ENCODE measurements at regions of chr1 and their contacts with region 1.

Region 1: DNA sequence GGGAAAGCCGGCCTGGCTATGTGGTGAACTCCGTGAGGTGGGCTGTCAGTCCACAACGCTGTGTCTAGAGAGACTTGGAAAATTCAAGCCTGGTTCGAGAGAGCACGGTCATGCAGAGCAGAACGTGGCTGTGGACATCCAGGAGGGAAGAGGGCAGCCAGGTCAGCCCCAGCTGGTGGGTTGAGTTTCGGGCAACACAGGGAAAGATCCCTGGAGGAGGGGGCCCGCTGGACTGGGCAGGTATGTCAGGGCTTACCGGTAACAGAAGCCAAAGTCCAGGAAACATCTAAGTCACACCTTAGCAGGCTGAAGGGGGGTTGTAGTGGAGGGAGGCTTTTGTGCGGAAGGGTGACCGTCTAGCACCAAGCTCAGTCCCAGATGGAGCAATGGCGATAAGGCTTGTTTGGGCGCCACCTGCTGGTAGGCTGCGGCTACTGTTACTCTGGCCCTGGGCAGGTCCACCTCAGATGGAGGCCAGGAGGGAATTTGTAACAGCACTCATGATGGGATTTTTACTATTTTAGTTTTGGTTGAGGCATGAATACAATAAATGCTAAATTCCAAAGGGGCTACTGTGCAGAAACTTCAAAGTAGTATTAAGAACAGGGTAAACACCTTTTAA is 143.3 kb upstream of the ZNF644 start:
- DNase-seq: peak; percentile 44
- ATAC-seq: peak; percentile 97
- H3K4me3 ChIP-seq: no peak overlapping the region
- H3K27ac ChIP-seq: no peak overlapping the region
- H3K4me1 ChIP-seq: no peaks in the 10 kb centered on the region
- H3K27me3 ChIP-seq: no peaks in the 10 kb centered on the region
- CTCF ChIP-seq: peak; percentile 80 to 98 (median 96)
- POLR2A ChIP-seq: no peak
- RAD21 ChIP-seq: peak; percentile 85

Region 2: GRCh38 chr1:90114521-90115141 is 1050.5 kb before region 1 on chr1:
- CTCF ChIA-PET with region 1: interaction called, 16 read pairs
- POLR2A ChIA-PET with region 1: no interaction called
- RAD21 ChIA-PET with region 1: no interaction called
- intact Hi-C with region 1: loop called (anchors 1 kb)
- DNase-seq: peak; percentile 56
- ATAC-seq: peak; percentile 74; the same call in 1 of the 2 replicates
- H3K4me3 ChIP-seq: no peak overlapping the region
- H3K27ac ChIP-seq: no peak overlapping the region
- H3K4me1 ChIP-seq: no peaks in the 10 kb centered on the region
- H3K27me3 ChIP-seq: peaks cover 44% of the 10 kb centered on the region
- CTCF ChIP-seq: peak; percentile 53 to 81 (median 69); a peak in 5 of 6 replicates
- POLR2A ChIP-seq: no peak
- RAD21 ChIP-seq: peak; percentile 75

Region 3: DNA sequence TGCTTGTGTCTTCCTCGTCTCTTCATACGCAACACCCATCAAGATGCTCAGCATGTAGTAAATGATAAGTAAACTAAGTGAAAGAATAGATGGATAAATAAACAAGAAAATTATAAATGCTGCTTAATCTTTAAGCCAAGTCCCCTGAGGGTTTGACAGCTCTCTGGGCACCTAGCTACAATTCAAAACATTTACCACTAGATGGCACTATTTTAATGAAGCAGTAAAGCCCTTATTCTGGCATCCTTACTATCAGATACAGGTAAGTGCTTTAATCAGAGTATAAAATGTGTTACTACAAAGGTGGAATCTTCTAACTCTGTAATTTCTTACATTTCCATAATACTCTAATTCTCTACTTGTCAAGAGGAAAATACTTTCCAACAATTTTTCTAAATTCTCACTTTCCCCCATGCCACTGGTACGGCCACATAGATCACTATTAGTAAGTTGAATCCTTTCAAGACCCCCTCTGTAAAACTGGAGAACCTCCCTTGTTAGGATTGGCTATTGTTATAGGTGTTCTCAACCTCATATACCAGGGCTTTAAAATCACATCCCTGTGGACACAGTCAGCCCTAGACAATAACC is 585.8 kb before region 1 on chr1:
- CTCF ChIA-PET with region 1: interaction called, 18 read pairs
- POLR2A ChIA-PET with region 1: no interaction called
- RAD21 ChIA-PET with region 1: no interaction called
- intact Hi-C with region 1: no loop called
- DNase-seq: peak; percentile 43
- ATAC-seq: peak; percentile 86
- H3K4me3 ChIP-seq: no peak overlapping the region
- H3K27ac ChIP-seq: no peak overlapping the region
- H3K4me1 ChIP-seq: no peaks in the 10 kb centered on the region
- H3K27me3 ChIP-seq: peaks cover 26% of the 10 kb centered on the region
- CTCF ChIP-seq: peak; percentile 42 to 71 (median 46); a peak in 5 of 6 replicates
- POLR2A ChIP-seq: no peak
- RAD21 ChIP-seq: peak; percentile 58

Region 4: DNA sequence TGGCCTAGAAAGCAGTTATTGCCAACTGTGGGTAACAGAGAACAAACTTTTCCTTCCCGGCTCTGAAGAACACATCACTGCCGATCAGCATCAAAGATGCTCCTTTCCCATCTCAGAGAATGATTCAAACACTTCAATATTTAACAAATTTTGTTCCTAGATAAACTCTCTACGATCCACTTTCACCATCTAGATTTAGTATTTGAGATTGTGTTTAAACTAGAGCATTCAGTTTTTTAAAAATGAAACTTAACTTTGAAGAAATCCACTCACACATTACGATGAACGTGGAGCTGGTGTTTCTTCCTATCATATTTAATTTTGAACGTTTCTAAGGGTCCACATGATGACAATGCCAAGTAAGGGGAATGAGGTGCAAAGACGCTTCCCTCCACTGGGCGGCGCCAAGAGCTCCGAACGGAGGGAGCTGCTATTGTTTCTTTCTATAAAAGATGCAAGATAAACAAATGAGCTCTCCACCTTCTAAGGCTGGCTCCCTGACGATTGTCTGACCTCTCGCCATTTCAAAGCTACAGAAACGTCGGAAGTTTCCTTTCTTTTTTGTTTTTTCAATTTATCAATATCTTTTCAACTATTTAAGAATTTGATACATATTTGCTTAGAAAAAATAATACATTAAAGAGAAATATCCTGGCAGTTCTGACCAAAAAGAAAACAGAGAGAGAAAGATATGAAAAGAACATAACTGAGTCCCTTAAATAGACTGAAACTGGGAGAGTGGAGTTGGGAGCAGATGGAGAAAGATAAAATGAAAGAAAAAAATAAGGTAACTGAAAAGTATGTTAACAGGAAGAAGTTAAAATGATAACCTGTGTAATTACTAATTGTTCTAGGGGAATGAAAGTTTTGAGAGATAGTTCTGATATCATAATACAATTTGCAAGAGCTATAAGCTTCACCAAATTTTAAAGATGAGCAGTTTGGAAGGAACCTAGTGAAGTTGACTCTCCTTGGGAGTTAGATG is 443.6 kb before region 1 on chr1:
- CTCF ChIA-PET with region 1: interaction called, 57 read pairs
- POLR2A ChIA-PET with region 1: no interaction called
- RAD21 ChIA-PET with region 1: interaction called, 8 to 13 read pairs
- intact Hi-C with region 1: loop called (anchors 2 kb)
- DNase-seq: peak; percentile 52
- ATAC-seq: peak; percentile 94
- H3K4me3 ChIP-seq: no peak overlapping the region
- H3K27ac ChIP-seq: no peak overlapping the region
- H3K4me1 ChIP-seq: peaks cover 0 to 5% of the 10 kb centered on the region in 2 experiments; a peak in 1 of 4 replicates
- H3K27me3 ChIP-seq: no peaks in the 10 kb centered on the region
- CTCF ChIP-seq: peak; percentile 83 to 93 (median 92)
- POLR2A ChIP-seq: no peak
- RAD21 ChIP-seq: peak; percentile 81

Region 5: GRCh38 chr1:91244737-91245136 is 79.6 kb after region 1 on chr1:
- CTCF ChIA-PET with region 1: interaction called, 24 read pairs
- POLR2A ChIA-PET with region 1: no interaction called
- RAD21 ChIA-PET with region 1: no interaction called
- intact Hi-C with region 1: no loop called
- DNase-seq: no peak
- ATAC-seq: no peak
- H3K4me3 ChIP-seq: no peak overlapping the region
- H3K27ac ChIP-seq: no peak overlapping the region
- H3K4me1 ChIP-seq: peaks cover 7 to 8% of the 10 kb centered on the region in 2 experiments; a peak in 2 of 4 replicates
- H3K27me3 ChIP-seq: no peaks in the 10 kb centered on the region
- CTCF ChIP-seq: 0 out of 6 replicates have a peak, but pooled peaks of 1 of the 3 experiments have one; percentile 11
- POLR2A ChIP-seq: no peak
- RAD21 ChIP-seq: no peak

Region 6: GRCh38 chr1:91393042-91393441 is 227.9 kb after region 1 on chr1:
- CTCF ChIA-PET with region 1: no interaction called
- POLR2A ChIA-PET with region 1: no interaction called
- RAD21 ChIA-PET with region 1: no interaction called
- intact Hi-C with region 1: no loop called
- DNase-seq: no peak
- ATAC-seq: no peak
- H3K4me3 ChIP-seq: no peak overlapping the region
- H3K27ac ChIP-seq: no peak overlapping the region
- H3K4me1 ChIP-seq: no peaks in the 10 kb centered on the region
- H3K27me3 ChIP-seq: no peaks in the 10 kb centered on the region
- CTCF ChIP-seq: no peak
- POLR2A ChIP-seq: no peak
- RAD21 ChIP-seq: no peak

Region 7: GRCh38 chr1:91404151-91405012 is 239.2 kb after region 1 on chr1 and contains the start of gene HFM1:
- CTCF ChIA-PET with region 1: interaction called, 15 read pairs
- POLR2A ChIA-PET with region 1: no interaction called
- RAD21 ChIA-PET with region 1: no interaction called
- intact Hi-C with region 1: loop called (anchors 1 kb)
- DNase-seq: peak; percentile 41
- ATAC-seq: peak; percentile 93
- H3K4me3 ChIP-seq: peak within 1 kb of the TSS; percentile 50 to 58
- H3K27ac ChIP-seq: no peak within 1 kb of the TSS; the same call in 1 of the 2 replicates
- H3K4me1 ChIP-seq: peaks cover 0 to 3% of the 10 kb centered on the region in 2 experiments; a peak in 1 of 4 replicates
- H3K27me3 ChIP-seq: no peaks in the 10 kb centered on the region
- CTCF ChIP-seq: no peak
- POLR2A ChIP-seq: no peak
- RAD21 ChIP-seq: no peak
- total RNA-seq, gene HFM1: 0.07 TPM

Region 8: GRCh38 chr1:91924146-91924545 is 759.0 kb after region 1 on chr1:
- CTCF ChIA-PET with region 1: no interaction called
- POLR2A ChIA-PET with region 1: no interaction called
- RAD21 ChIA-PET with region 1: no interaction called
- intact Hi-C with region 1: loop called (anchors 10 kb)
- DNase-seq: no peak
- ATAC-seq: no peak
- H3K4me3 ChIP-seq: no peak overlapping the region
- H3K27ac ChIP-seq: no peak overlapping the region
- H3K4me1 ChIP-seq: peaks cover 4 to 9% of the 10 kb centered on the region in 2 experiments; a peak in 1 of 4 replicates
- H3K27me3 ChIP-seq: no peaks in the 10 kb centered on the region
- CTCF ChIP-seq: no peak
- POLR2A ChIP-seq: no peak
- RAD21 ChIP-seq: no peak